Prostate gland (tissue), 2 donors: ENCODE measurements at regions of chr2 and their contacts with region 1.

Region 1: GRCh38 chr2:36780231-36780839 is 83.8 kb downstream of the VIT start:
- DNase-seq: peak; percentile 27
- H3K4me3 ChIP-seq: no peak overlapping the region
- H3K27ac ChIP-seq: no peak overlapping the region
- H3K4me1 ChIP-seq: no peaks in the 10 kb centered on the region
- H3K27me3 ChIP-seq: no peaks in the 10 kb centered on the region
- CTCF ChIP-seq: peak; percentile 79 to 85 (median 81)
- POLR2A ChIP-seq: no peak

Region 2: DNA sequence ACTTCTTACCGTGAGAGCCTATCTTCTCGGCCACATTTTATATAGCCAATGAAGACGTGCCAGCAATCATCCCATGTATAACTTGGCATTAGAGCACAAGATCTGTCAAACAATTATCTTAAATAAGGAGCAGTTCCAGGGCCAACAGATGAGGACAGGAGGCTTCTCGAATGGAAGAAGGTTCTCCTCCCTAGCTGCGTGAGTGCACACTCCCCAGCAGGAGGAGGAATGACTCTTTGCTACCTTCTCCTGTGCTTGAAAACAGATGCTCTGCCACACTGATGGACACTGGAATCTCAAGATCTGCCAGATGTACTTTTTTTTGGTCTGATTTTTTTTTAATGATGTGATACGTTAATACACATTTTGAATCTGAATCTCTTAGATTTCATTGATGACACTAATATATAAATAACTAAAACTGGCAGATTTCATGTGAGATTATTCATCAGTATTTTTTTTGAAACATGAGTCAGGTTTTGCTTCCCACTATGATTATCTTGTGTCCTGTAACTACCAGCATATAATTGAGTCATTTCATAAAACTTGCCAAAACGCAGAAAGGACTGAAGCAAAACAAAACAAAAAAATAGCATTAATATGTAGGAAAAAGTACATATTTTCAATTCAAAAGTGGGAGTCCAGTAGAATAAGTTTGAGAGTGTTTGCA is 84.5 kb before region 1 on chr2:
- intact Hi-C with region 1: loop called (anchors 5 kb)
- DNase-seq: no peak
- H3K4me3 ChIP-seq: no peak overlapping the region
- H3K27ac ChIP-seq: no peak overlapping the region
- H3K4me1 ChIP-seq: no peaks in the 10 kb centered on the region
- H3K27me3 ChIP-seq: no peaks in the 10 kb centered on the region
- CTCF ChIP-seq: peak in 2 of 4 experiments; percentile 21 to 26
- POLR2A ChIP-seq: no peak

Region 3: DNA sequence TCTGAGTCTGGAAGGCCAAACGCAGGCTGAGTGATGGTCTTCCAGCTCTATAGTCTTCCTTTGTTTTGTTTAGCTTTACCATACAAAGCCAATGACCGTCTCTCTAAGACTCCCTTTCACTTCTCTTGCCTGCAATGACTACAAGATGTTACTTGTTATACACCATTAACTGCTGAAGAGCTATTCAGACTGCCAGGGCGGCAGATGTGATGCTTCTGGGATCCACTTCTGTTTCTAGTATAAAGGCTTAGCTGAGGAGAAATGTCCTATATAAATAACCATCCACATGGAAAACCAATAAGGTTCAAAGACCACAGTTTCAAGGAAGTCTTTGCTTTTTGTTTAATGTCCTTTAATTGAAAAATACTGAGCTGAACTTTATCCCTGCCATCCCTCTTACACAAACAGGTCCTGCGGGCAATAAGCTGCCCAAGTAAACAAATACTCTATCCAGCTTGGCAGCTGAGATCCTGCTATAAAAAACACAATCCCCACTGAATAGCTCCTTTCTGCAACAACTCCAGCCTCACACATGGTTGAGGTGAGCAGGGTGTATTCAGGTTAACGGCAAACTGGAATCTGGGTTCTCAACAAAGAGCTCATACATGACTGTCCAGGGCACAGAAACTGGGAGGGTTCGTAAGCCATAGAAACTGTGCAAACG is 40.7 kb after region 1 on chr2:
- intact Hi-C with region 1: no loop called
- DNase-seq: peak; percentile 75
- H3K4me3 ChIP-seq: no peak overlapping the region
- H3K27ac ChIP-seq: peak overlapping the region; percentile 53 to 65
- H3K4me1 ChIP-seq: peaks cover 5% of the 10 kb centered on the region
- H3K27me3 ChIP-seq: no peaks in the 10 kb centered on the region
- CTCF ChIP-seq: no peak
- POLR2A ChIP-seq: no peak

Region 4: GRCh38 chr2:37005118-37005868 is 225.0 kb after region 1 on chr2:
- intact Hi-C with region 1: loop called (anchors 2 kb)
- DNase-seq: no peak
- H3K4me3 ChIP-seq: no peak overlapping the region
- H3K27ac ChIP-seq: no peak overlapping the region
- H3K4me1 ChIP-seq: no peaks in the 10 kb centered on the region
- H3K27me3 ChIP-seq: no peaks in the 10 kb centered on the region
- CTCF ChIP-seq: peak in 3 of 4 experiments; percentile 21 to 49 (median 49)
- POLR2A ChIP-seq: no peak